Left cardiac atrium (tissue), 4 donors: ENCODE measurements at regions of chr19 and their contacts with region 1.

Region 1: DNA sequence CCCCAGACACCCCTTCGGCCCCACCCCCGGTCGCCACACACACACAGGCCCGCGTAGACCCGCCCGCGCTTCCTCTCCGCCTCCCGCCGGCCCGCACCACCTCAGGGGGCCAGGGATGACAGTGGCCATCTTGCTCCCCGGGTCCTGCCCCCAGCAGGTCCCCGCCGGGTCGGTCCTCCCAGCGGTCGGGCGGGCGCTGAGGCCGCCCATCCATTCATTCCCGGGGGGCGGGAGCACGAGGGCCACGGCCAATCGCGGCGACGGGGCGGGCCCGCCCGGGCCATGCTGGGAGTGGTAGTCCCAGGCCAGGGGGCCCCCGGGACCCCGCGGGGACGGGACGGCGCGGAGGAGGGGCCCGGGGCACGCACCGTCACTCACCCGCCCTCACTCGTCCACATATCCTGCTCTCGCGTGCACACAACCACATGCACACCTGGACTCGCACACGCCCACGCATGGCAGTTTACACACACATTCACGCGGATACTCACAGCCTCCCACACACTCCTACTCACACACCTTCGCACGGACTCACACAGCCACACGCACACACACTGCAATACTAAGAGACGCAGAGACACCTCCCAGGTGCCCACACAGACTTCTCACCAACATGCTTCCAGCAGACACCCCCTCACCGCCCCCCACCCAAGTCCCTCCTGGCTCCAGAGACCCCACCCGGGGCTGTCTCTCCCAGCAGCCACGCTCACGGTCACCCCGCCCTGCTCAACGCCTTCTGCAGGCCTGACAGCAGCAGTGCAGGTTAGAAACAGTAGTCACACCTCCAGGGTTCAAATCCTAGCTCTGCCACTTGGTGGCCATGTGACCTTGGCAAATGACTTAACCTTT is at the start of gene DPF1:
- DNase-seq: peak; percentile 53
- ATAC-seq: peak; percentile 86 to 89
- total RNA-seq, gene DPF1: 0.26 TPM in 1 of 2 donors, not detected in the other

Region 2: DNA sequence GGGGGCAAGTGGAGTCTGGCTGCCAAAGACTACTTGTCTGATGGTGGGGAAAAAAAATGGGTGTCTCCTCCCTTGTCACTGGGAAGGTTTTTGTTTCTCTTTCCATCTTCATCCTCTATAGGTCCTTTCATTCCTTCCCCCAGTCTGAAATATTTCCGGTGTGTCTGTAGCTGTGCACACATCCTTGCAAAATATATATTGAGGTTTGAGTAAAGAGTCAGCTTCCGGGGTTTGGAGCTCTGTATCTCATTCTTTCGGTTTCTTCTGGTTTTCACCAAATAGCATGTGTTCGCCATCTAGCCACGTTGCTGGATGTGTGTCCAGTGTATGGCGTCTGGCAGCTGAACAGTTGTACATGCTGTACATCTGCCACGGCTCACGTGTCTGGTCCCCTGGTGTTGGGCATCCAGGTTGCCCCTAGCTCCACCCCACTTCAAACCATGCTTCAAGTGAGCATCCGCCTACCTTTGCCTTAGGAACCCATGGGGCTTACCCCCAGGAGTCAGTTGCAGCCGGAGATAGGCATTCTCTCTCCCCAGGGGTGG is 175.1 kb before region 1 on chr19:
- intact Hi-C with region 1: no loop called
- DNase-seq: no peak
- ATAC-seq: peak; percentile 18 to 47

Region 3: DNA sequence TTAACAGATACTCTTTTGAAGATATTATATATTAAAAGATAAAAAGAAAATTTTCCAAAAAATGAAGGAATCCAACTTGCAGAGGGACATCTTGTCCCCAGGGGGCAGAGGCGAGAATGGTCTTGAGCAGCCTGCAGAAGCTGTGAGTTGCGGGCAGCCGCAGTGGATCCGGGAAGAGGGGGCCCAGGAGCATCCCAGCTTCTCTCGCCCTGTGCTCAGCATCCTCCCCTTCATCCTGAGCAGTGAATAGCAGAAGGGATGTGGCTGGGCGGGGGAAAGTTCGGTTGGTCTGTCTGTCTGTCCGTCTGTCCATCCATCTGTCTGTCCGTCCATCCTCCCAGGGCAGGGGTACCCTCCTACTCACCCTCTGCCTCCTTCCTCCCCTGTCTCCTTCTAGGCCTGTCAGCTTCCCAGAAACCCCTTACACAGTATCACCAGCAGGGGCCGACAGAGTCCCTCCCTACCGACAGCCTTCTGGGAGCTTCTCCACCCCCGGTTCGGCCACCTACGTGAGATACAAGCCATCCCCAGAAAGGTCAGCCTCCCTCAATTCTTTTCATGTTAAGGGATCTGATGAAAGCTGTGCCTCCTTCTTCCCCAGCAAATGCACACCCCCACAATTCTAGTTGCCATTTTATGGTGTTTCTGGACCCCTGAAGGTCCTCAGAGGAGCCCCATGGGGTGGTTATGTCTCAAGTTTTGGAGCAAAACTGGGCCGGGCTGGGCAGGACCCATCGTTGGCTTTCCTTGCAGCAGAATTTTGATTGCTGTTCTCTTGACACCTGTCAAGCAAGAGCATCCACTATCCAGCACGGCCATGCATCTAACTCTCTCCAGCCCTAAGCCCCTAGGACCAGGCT is 81.8 kb before region 1 on chr19:
- intact Hi-C with region 1: loop called (anchors 10 kb)
- DNase-seq: peak; percentile 62
- ATAC-seq: peak; percentile 53 to 81

Region 4: GRCh38 chr19:38183251-38183897 is 40.9 kb before region 1 on chr19:
- intact Hi-C with region 1: no loop called
- DNase-seq: peak; percentile 59
- ATAC-seq: peak; percentile 79 to 87